ENCODE measurements at regions of chr3 and their contacts with region 1.

Region 1: DNA sequence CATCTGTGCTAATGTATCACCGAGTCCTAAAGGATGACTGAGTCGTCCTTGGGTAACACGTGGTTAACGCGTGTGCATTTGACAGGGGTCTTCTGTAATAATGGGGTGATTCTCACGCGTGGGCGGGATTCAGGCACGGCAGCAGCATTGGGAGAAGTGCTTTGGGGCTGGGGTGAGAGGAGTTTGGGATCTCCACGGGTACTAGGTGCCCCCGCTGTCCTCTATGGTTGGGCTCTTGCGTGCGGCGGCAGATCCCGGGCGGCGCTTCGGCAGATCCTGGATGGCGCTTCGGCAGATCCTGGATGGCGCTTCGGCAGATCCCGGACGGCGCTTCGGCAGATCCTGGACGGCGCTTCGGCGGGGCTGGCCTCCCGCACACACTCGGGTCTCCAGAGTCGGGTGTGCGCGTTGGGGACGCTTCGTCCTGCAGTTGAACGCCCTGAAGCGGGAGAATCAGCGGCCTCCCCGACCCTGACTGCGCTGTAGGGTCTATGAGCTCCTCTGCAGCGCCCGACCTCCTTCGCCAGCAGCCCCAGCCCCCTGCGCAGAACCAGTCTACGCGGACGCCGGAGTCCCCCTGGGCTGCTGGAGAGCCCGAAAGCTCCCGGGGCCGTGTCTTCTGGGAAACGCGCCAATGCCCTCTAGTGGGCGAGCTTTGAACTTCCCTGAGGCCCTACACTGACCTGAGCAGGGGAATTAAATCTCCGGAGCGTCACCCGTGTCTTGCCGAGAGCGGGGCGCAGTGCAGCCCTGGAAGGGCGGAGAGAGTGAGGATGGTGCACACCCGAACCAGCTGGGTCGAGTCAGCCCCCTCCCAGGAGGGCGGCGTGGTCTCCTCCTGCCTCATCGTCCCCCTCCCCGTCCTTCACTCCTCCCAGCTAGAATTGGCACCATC is 48.1 kb upstream of the EPHB3 start:
- DNase-seq: peak; percentile 72 to 78 (median 74)
- H3K4me3 ChIP-seq: peak overlapping the region in 1 of 2 donors; percentile 51
- H3K4me3 Mint-ChIP-seq: peak overlapping the region; percentile 41 to 77 (median 68)
- H3K27ac ChIP-seq: no peak overlapping the region
- H3K27ac Mint-ChIP-seq: no peak overlapping the region
- H3K4me1 ChIP-seq: peaks cover 11% of the 10 kb centered on the region
- H3K4me1 Mint-ChIP-seq: peaks cover 4 to 16% (median 8%) of the 10 kb centered on the region in 4 donors
- H3K27me3 ChIP-seq: peaks cover 26% of the 10 kb centered on the region
- H3K27me3 Mint-ChIP-seq: peaks cover 39 to 51% of the 10 kb centered on the region in 2 donors

Region 2: GRCh38 chr3:184354121-184354728 is 159.3 kb before region 1 on chr3:
- CTCF ChIA-PET with region 1: interaction called, 31 read pairs
- POLR2A ChIA-PET with region 1: no interaction called
- intact Hi-C with region 1: loop called (anchors 1 kb)
- DNase-seq: peak in 4 of 5 donors; percentile 39 to 55 (median 43)
- H3K4me3 ChIP-seq: no peak overlapping the region
- H3K4me3 Mint-ChIP-seq: peak overlapping the region in 1 of 8 donors; percentile 15
- H3K27ac ChIP-seq: no peak overlapping the region
- H3K27ac Mint-ChIP-seq: no peak overlapping the region
- H3K4me1 ChIP-seq: peaks cover 10% of the 10 kb centered on the region
- H3K4me1 Mint-ChIP-seq: peaks cover 0 to 5% (median 0%) of the 10 kb centered on the region in 4 donors
- H3K27me3 ChIP-seq: no peaks in the 10 kb centered on the region
- H3K27me3 Mint-ChIP-seq: no peaks in the 10 kb centered on the region

Region 3: GRCh38 chr3:184417619-184418327 is 95.8 kb before region 1 on chr3:
- CTCF ChIA-PET with region 1: interaction called, 18 read pairs
- POLR2A ChIA-PET with region 1: no interaction called
- intact Hi-C with region 1: loop called (anchors 1 kb)
- DNase-seq: peak; percentile 60 to 67 (median 61)
- H3K4me3 ChIP-seq: no peak overlapping the region
- H3K4me3 Mint-ChIP-seq: peak overlapping the region in 1 of 8 donors; percentile 20
- H3K27ac ChIP-seq: no peak overlapping the region
- H3K27ac Mint-ChIP-seq: no peak overlapping the region
- H3K4me1 ChIP-seq: no peaks in the 10 kb centered on the region
- H3K4me1 Mint-ChIP-seq: peaks cover 0 to 2% (median 0%) of the 10 kb centered on the region in 4 donors
- H3K27me3 ChIP-seq: no peaks in the 10 kb centered on the region
- H3K27me3 Mint-ChIP-seq: peaks cover 0 to under 1% of the 10 kb centered on the region in 2 donors

Region 4: DNA sequence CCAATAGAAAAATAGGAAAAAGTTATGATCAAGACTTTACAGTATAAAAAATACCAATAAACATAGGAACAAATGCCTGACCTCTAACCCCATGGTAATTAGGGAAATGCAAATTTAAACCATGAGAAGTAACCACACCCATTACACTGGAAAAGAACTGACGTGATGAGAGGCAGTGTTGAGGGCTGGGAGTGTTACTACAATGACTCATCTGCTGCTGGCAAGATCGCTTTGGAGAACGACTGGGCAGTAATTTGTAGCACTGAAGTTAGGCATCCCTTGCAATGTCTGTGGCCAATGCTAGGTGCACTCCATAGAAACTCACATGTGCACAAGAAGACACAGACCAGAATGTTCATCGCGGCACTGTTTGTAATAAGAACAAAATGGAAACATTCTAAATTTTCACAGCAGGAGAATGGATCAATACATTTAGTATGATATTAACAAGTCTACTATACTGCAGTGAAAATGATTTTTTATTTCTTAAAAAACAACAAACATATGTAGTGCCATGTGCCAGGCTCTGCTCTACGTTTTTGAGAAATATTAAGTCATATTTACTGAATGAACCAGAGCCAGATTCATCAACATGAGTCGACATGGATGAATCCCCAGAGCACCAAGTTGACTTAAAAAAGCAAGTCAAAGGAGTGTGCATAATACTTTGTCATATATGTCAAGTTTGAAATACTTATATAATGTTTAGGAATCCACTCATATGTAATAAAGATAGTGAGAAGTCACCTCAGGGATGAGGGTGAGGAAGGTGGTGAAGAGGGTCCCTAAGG is 10.5 kb after region 1 on chr3:
- CTCF ChIA-PET with region 1: interaction called, 32 read pairs
- POLR2A ChIA-PET with region 1: interaction called, 11 read pairs
- intact Hi-C with region 1: no loop called
- DNase-seq: no peak
- H3K4me3 ChIP-seq: no peak overlapping the region
- H3K4me3 Mint-ChIP-seq: peak overlapping the region in 3 of 8 donors; percentile 12 to 79 (median 55)
- H3K27ac ChIP-seq: no peak overlapping the region
- H3K27ac Mint-ChIP-seq: no peak overlapping the region
- H3K4me1 ChIP-seq: peaks cover 15% of the 10 kb centered on the region
- H3K4me1 Mint-ChIP-seq: peaks cover 7 to 17% (median 9%) of the 10 kb centered on the region in 4 donors
- H3K27me3 ChIP-seq: peaks cover 16% of the 10 kb centered on the region
- H3K27me3 Mint-ChIP-seq: peaks cover 14 to 25% of the 10 kb centered on the region in 2 donors

Region 5: GRCh38 chr3:184568924-184569829 is 55.7 kb after region 1 on chr3:
- CTCF ChIA-PET with region 1: no interaction called
- POLR2A ChIA-PET with region 1: no interaction called
- intact Hi-C with region 1: no loop called
- DNase-seq: no peak
- H3K4me3 ChIP-seq: no peak overlapping the region
- H3K4me3 Mint-ChIP-seq: peak overlapping the region; percentile 7 to 72 (median 54)
- H3K27ac ChIP-seq: no peak overlapping the region
- H3K27ac Mint-ChIP-seq: no peak overlapping the region
- H3K4me1 ChIP-seq: peaks cover 16% of the 10 kb centered on the region
- H3K4me1 Mint-ChIP-seq: peaks cover 8 to 32% (median 16%) of the 10 kb centered on the region in 4 donors
- H3K27me3 ChIP-seq: no peaks in the 10 kb centered on the region
- H3K27me3 Mint-ChIP-seq: peaks cover 9 to 22% of the 10 kb centered on the region in 2 donors

Region 6: DNA sequence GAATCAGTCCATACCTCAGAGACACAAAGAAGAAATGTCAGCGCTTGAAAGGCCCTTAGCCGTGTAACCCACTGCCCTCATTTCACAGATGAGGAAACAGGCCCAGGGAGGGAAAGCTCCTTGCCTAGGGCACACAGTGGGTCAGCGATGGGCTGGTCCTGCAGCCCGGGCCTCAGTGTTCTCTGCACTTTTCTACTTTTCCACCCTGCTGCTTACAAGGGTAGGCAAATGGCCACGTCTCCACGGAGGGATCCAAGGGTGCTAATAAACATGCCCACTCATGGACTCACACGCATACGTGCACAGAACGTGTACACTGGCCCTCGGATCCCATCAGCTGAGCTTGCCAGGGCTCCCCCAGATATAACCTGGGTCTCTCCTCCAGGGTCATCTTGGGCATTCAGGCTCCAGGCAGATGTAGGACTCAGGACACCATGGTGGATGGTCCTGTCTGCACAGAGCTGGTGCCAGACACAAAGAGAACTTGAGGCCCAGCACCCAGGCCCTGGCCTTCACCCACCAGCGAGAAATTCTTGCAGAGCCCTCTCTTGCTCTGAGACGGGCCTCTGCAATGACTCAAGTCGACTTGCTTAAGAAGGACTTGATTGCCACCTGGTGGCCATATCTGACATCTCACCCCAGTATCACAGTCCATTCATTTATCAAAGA is 263.9 kb after region 1 on chr3:
- CTCF ChIA-PET with region 1: interaction called, 5 read pairs
- POLR2A ChIA-PET with region 1: no interaction called
- intact Hi-C with region 1: loop called (anchors 1 kb)
- DNase-seq: peak; percentile 75 to 86 (median 76)
- H3K4me3 ChIP-seq: no peak overlapping the region
- H3K4me3 Mint-ChIP-seq: no peak overlapping the region
- H3K27ac ChIP-seq: no peak overlapping the region
- H3K27ac Mint-ChIP-seq: no peak overlapping the region
- H3K4me1 ChIP-seq: no peaks in the 10 kb centered on the region
- H3K4me1 Mint-ChIP-seq: peaks cover 0 to 4% (median under 1%) of the 10 kb centered on the region in 4 donors
- H3K27me3 ChIP-seq: no peaks in the 10 kb centered on the region
- H3K27me3 Mint-ChIP-seq: peaks cover 14 to 30% of the 10 kb centered on the region in 2 donors